Heart left ventricle (tissue), 16 donors: ENCODE measurements at regions of chr1 and their contacts with region 1.

Region 1: GRCh38 chr1:199684686-199685273 is 342.7 kb upstream of the NR5A2 start:
- DNase-seq: peak in 1 of 5 donors; percentile 9
- ATAC-seq: peak; percentile 58 to 80 (median 69)
- H3K4me3 ChIP-seq: no peak overlapping the region
- H3K27ac ChIP-seq: no peak overlapping the region
- H3K4me1 ChIP-seq: no peaks in the 10 kb centered on the region
- H3K27me3 ChIP-seq: peaks cover 0 to 12% (median 0%) of the 10 kb centered on the region in 9 donors
- CTCF ChIP-seq: peak; percentile 68 to 84 (median 80)
- POLR2A ChIP-seq: no peak

Region 2: GRCh38 chr1:200139661-200140250 is 455.0 kb after region 1 on chr1:
- intact Hi-C with region 1: loop called in 1 of 10 experiments (anchors 5 kb)
- DNase-seq: no peak
- ATAC-seq: peak in 2 of 4 donors; percentile 65 to 73
- H3K4me3 ChIP-seq: no peak overlapping the region
- H3K27ac ChIP-seq: no peak overlapping the region
- H3K4me1 ChIP-seq: peaks cover 0 to 7% (median 0%) of the 10 kb centered on the region in 12 donors
- H3K27me3 ChIP-seq: no peaks in the 10 kb centered on the region
- CTCF ChIP-seq: peak; percentile 17 to 66 (median 52)
- POLR2A ChIP-seq: no peak

Region 3: DNA sequence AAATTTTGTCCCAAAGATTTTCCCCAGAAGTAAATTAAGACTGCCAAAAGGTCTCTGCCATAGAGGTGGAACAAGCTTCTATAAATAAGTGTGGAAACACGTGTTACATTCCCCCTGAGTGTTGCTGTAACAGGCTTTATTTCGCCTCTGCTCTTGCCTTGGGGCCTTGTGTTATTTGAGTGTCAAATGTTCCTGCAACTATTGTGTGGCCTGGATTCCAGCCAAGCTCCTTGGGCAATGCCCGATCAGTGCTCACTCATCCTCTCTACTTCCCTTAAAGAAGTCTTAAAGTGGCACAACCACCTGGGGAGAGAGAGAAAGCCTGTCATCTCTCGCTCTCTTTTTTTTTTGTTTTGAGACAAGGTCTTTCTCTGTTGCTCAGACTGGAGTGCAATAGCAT is 499.4 kb after region 1 on chr1:
- intact Hi-C with region 1: loop called in 1 of 10 experiments (anchors 10 kb)
- DNase-seq: peak; percentile 75 to 91 (median 84)
- ATAC-seq: peak; percentile 93 to 98 (median 96)
- H3K4me3 ChIP-seq: no peak overlapping the region
- H3K27ac ChIP-seq: peak overlapping the region in 10 of 12 donors; percentile 4 to 65 (median 33)
- H3K4me1 ChIP-seq: peaks cover 0 to 17% (median 10%) of the 10 kb centered on the region in 12 donors
- H3K27me3 ChIP-seq: no peaks in the 10 kb centered on the region
- CTCF ChIP-seq: no peak
- POLR2A ChIP-seq: no peak

Region 4: DNA sequence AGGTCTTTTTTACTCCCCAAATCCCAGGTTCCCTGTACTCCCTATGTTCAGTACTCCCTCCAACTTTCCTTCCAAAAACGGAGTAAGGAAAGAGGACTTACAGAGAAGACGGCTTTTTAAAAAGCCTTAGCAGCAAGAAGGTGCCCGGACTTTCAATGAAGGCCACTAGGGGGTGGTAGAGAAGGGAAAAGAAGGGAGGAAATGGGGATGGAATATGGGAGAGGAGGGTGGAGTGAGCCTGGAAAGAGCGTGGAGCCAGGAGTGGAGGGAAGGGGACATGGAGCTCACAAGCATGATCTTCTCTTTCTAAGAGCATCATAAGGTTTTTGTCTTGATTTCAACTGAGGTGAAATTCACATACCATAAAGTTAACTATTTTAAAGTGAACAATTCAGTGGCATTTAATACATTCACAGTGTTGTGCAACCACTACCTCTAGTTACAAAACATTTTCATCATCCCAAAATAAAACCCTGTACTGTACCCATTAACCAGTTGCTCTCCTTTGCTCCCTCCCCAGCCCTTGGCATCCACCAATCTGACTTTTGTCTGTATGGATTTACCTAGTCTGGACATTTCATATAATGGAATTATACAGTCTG is 595.1 kb after region 1 on chr1:
- intact Hi-C with region 1: loop called in 3 of 10 experiments (anchors 10 kb)
- DNase-seq: no peak
- ATAC-seq: no peak
- H3K4me3 ChIP-seq: no peak overlapping the region
- H3K27ac ChIP-seq: no peak overlapping the region
- H3K4me1 ChIP-seq: peaks cover 0 to 8% (median 0%) of the 10 kb centered on the region in 12 donors
- H3K27me3 ChIP-seq: no peaks in the 10 kb centered on the region
- CTCF ChIP-seq: peak in 11 of 12 donors; percentile 25 to 63 (median 53)
- POLR2A ChIP-seq: no peak

Region 5: GRCh38 chr1:200302192-200302920 is 617.6 kb after region 1 on chr1:
- intact Hi-C with region 1: loop called in 8 of 10 experiments (anchors 2 to 10 kb)
- DNase-seq: peak in 4 of 5 donors; percentile 19 to 66 (median 28)
- ATAC-seq: peak; percentile 44 to 74 (median 52)
- H3K4me3 ChIP-seq: peak overlapping the region; percentile 48 to 81 (median 70)
- H3K27ac ChIP-seq: peak overlapping the region in 4 of 12 donors; percentile 13 to 57 (median 26)
- H3K4me1 ChIP-seq: peaks cover 0 to 17% (median 3%) of the 10 kb centered on the region in 12 donors
- H3K27me3 ChIP-seq: no peaks in the 10 kb centered on the region
- CTCF ChIP-seq: peak in 4 of 12 donors; percentile 10 to 29 (median 18)
- POLR2A ChIP-seq: no peak

Region 6: DNA sequence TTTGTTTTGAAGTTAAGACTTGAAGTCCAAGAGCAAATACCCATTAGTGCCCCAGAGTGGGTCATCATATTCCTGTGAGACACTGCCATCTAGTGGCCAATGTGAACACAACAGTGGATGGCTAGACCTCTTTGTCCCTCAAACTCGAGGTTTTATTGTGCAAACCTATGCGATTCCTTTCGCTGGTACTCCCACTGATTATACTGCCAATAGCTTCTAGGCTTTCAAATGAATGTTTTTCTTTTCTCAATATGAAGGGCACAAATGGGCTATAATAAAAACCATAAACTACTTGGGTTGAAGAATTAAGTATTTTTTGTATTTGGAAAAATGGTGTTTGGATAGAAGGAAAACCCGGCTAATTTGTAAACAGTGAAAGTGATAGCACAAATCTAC is 825.4 kb after region 1 on chr1:
- intact Hi-C with region 1: loop called in 7 of 10 experiments (anchors 2 to 5 kb)
- DNase-seq: peak in 4 of 5 donors; percentile 48 to 58 (median 56)
- ATAC-seq: peak in 3 of 4 donors; percentile 76 to 84 (median 83)
- H3K4me3 ChIP-seq: no peak overlapping the region
- H3K27ac ChIP-seq: no peak overlapping the region
- H3K4me1 ChIP-seq: no peaks in the 10 kb centered on the region
- H3K27me3 ChIP-seq: peaks cover 0 to 33% (median 4%) of the 10 kb centered on the region in 9 donors
- CTCF ChIP-seq: peak; percentile 79 to 97 (median 94)
- POLR2A ChIP-seq: no peak